Activated CD4-positive, alpha-beta T cell treated with anti-CD3 and anti-CD28 coated beads, Interleukin-2, amount 10 ng/mL, durations not matched to agents 24 days and 14 days (primary cell): ENCODE measurements at regions of chr2 and their contacts with region 1.

Region 1: DNA sequence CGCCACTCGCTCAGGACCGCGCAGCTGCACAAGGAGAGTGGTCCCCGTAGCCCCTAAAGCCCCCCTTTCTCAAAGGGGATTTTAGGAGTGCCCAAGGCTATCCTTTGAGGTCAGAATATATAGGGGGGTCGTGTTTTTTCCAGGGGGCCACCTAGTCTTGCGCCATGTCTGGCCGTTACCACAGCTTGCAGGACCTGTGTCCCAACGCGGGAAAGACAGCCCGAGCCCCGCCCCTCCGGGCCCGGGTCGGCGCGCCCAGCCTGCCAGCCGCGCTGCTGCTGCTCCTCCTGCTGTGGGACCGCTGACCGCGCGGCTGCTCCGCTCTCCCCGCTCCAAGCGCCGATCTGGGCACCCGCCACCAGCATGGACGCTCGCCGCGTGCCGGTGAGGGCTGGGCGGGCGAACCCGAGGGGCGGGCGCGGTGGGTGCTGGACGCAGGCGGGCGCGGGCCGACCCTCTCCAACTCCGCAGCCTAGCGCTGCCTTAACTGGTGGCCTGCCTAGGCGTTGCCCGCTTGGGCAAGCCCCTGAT is at the start of gene CDCA7:
- DNase-seq: peak; percentile 94
- H3K4me3 Mint-ChIP-seq: peak within 1 kb of the TSS; percentile 92
- H3K27ac Mint-ChIP-seq: peak within 1 kb of the TSS; percentile 92
- H3K4me1 Mint-ChIP-seq: peaks cover 39% of the 10 kb centered on the region
- H3K27me3 Mint-ChIP-seq: peaks cover 11% of the 10 kb centered on the region
- total RNA-seq, gene CDCA7: 116 and 118 TPM in 2 replicates

Region 2: DNA sequence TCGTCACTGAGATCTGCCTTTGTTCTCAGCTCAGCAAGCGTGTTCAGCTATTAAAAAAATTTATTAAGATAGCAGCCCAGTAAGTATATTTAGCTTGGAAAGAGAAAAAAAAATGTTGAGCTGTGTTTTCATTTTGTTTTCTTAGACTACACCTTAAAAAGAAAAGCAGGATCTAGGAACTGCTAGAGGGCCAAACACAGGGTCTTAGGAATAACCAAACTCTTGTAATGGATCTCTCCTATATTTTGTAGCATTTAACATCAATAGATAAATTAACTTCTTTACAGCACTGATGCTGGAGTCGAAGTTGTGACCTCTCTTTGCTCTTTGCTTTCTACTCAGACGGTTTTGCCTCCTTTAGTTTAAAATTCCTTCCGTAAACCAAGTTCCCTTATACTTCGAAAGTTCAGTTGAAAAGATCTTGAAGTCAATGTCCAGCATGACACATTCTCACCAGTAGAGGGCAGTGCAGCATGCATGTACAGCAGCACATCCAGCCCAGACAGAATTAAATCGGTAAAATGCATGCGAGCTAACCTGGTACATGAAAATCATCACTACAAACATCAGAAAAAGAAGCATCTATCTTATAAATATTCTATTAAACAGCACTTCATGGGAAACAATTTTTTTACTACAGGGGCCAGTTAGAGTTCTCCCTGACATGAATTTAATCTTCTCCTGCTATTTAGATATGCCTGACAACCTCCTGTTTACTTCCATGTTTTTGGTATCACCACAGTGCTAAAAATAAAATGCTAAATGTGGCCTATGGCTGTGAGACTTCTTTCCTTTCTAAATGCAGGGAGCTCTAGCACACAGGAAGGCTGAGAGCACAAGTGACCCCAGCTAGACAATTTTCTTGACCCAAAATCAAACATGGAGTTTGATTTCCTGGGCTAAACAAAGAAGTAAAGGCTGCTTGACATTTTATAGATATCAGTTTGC is 327.2 kb before region 1 on chr2:
- intact Hi-C with region 1: loop called (anchors 10 kb)
- DNase-seq: peak; percentile 92
- H3K4me3 Mint-ChIP-seq: no peak overlapping the region
- H3K27ac Mint-ChIP-seq: no peak overlapping the region
- H3K4me1 Mint-ChIP-seq: peaks cover 3% of the 10 kb centered on the region
- H3K27me3 Mint-ChIP-seq: peaks cover 13% of the 10 kb centered on the region

Region 3: GRCh38 chr2:173134703-173135102 is 220.0 kb before region 1 on chr2:
- intact Hi-C with region 1: loop called (anchors 1 kb)
- DNase-seq: peak; percentile 64
- H3K4me3 Mint-ChIP-seq: peak overlapping the region; percentile 28
- H3K27ac Mint-ChIP-seq: peak overlapping the region; percentile 30
- H3K4me1 Mint-ChIP-seq: peaks cover 59% of the 10 kb centered on the region
- H3K27me3 Mint-ChIP-seq: peaks cover 15% of the 10 kb centered on the region

Region 4: GRCh38 chr2:173286153-173286809 is 68.4 kb before region 1 on chr2:
- intact Hi-C with region 1: loop called (anchors 10 kb)
- DNase-seq: no peak
- H3K4me3 Mint-ChIP-seq: no peak overlapping the region
- H3K27ac Mint-ChIP-seq: no peak overlapping the region
- H3K4me1 Mint-ChIP-seq: peaks cover 2% of the 10 kb centered on the region
- H3K27me3 Mint-ChIP-seq: no peaks in the 10 kb centered on the region

Region 5: GRCh38 chr2:173965329-173966025 is 610.8 kb after region 1 on chr2 and contains the start of gene SP3:
- intact Hi-C with region 1: loop called (anchors 5 kb)
- DNase-seq: peak; percentile 98
- H3K4me3 Mint-ChIP-seq: peak within 1 kb of the TSS; percentile 90
- H3K27ac Mint-ChIP-seq: peak within 1 kb of the TSS; percentile 100
- H3K4me1 Mint-ChIP-seq: peaks cover 24% of the 10 kb centered on the region
- H3K27me3 Mint-ChIP-seq: no peaks in the 10 kb centered on the region
- total RNA-seq, gene SP3: 99.9 and 104 TPM in 2 replicates